A549 (cell line): ENCODE measurements at regions of chr21 and their contacts with region 1.

Region 1: DNA sequence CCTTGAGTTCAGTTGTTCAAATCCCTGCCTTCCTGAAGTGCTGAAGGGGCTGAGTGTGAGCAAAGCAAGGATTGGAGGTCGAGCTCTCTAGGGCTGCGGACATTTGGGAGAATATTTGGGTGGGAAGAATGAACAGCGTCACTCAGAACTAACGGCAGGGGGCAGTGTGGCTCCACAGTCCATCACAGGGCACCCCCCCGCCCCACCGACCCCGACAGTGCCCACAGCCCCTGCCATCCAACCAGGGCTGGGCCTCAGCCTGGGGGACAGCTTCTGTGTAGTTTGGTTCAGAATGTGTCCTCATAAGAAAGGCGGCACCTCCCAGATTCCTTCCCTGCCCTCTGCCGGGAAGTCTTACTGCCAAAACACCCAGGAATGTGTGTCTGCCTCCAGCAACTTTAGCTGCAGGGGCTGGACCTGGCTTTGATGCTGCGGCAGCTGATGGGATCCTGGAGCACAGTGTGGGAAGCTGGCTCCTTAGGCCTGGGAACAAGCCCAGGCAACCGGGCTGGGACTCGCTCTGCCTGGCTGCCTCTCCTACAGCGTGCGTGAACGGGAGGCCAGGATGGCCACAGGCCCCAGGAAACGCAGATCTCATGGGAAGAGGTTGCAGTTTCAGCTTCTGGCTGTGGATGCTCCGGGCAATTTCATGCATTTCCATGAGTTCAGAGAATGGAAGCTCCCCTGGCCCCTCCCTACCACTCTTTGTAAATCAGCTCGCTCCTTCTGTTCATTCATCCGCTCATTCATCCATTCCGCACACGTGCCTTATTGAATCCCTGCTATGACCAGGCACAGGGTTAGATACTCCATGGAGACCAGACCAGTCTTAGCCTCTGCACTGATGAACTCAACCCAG is 104.9 kb upstream of the TMPRSS2 start:
- DNase-seq: peak; percentile 50 to 75
- ATAC-seq: peak; percentile 79 to 91
- H3K4me3 ChIP-seq: no peak overlapping the region
- H3K27ac ChIP-seq: peak overlapping the region; percentile 72 to 85
- H3K4me1 ChIP-seq: peaks cover 28% of the 10 kb centered on the region
- CTCF ChIP-seq: peak; percentile 65
- EP300 ChIP-seq: no peak
- POLR2A ChIP-seq: no peak
- RAD21 ChIP-seq: peak; percentile 85 to 97

Region 2: GRCh38 chr21:41283211-41283818 is 329.6 kb before region 1 on chr21:
- CTCF ChIA-PET with region 1: interaction called, 25 read pairs
- POLR2A ChIA-PET with region 1: no interaction called
- DNase-seq: peak; percentile 50 to 69
- ATAC-seq: peak; percentile 95 to 96
- H3K4me3 ChIP-seq: no peak overlapping the region
- H3K27ac ChIP-seq: no peak overlapping the region
- H3K4me1 ChIP-seq: no peaks in the 10 kb centered on the region
- CTCF ChIP-seq: peak; percentile 71
- EP300 ChIP-seq: no peak
- POLR2A ChIP-seq: no peak
- RAD21 ChIP-seq: peak; percentile 78 to 82

Region 3: GRCh38 chr21:41630249-41630648 is 17.3 kb after region 1 on chr21:
- CTCF ChIA-PET with region 1: interaction called, 72 read pairs
- POLR2A ChIA-PET with region 1: no interaction called
- DNase-seq: peak; percentile 85 to 98
- ATAC-seq: peak; percentile 94 to 95
- H3K4me3 ChIP-seq: no peak overlapping the region
- H3K27ac ChIP-seq: peak overlapping the region; percentile 85 to 94
- H3K4me1 ChIP-seq: peaks cover 54% of the 10 kb centered on the region
- CTCF ChIP-seq: no peak
- EP300 ChIP-seq: peak; percentile 74 to 84; a peak in 3 of 5 replicates
- POLR2A ChIP-seq: no peak
- RAD21 ChIP-seq: peak in 1 of 2 experiments; percentile 30; a peak in 3 of 5 replicates

Region 4: DNA sequence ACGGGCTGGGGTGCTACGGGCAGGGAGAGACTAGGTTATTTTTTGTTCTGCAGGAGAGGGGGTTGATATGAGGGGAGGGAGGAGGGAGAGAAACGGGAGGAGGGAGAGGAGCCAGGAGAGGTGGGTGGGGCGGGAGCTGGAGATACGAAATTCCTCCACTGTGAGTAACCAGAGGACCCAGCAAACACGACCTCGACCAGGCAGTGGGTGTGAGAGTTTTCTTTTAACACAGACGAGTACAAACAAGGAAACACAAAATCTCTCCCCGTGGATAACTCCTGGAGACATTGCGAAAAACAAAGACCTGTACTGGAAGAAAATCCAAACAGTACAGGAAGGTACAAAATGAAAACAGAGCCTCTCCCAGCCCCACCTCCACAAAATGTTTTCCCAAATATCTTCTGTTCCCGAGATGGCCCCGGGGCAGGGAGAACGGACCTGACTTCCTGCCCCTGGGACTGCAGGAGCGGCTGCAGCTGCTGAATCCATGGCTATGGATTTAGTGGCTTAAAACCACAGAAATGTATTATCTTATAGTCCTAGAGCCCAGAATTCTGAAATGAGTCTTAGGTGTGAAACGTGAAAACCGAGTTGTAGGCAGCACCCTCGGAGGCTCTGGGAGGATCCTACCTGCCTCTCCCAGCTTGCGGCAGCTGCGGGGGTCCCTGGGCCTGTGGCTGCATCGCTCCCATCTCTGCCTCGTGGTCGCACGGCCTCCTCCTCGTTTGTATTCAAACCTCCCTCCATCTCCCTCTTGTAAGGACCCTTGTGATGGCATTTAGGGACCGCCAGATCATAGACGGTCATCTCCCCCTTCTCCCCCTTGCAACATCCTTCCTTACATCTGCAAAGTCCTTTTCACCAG is 71.7 kb after region 1 on chr21:
- CTCF ChIA-PET with region 1: interaction called, 20 read pairs
- POLR2A ChIA-PET with region 1: no interaction called
- DNase-seq: peak; percentile 40 to 79
- ATAC-seq: peak; percentile 65 to 71; a peak in 5 of 6 replicates
- H3K4me3 ChIP-seq: no peak overlapping the region
- H3K27ac ChIP-seq: peak overlapping the region; percentile 98
- H3K4me1 ChIP-seq: peaks cover 70% of the 10 kb centered on the region
- CTCF ChIP-seq: no peak
- EP300 ChIP-seq: no peak
- POLR2A ChIP-seq: no peak
- RAD21 ChIP-seq: peak in 1 of 2 experiments; percentile 13; a peak in 1 of 5 replicates

Region 5: DNA sequence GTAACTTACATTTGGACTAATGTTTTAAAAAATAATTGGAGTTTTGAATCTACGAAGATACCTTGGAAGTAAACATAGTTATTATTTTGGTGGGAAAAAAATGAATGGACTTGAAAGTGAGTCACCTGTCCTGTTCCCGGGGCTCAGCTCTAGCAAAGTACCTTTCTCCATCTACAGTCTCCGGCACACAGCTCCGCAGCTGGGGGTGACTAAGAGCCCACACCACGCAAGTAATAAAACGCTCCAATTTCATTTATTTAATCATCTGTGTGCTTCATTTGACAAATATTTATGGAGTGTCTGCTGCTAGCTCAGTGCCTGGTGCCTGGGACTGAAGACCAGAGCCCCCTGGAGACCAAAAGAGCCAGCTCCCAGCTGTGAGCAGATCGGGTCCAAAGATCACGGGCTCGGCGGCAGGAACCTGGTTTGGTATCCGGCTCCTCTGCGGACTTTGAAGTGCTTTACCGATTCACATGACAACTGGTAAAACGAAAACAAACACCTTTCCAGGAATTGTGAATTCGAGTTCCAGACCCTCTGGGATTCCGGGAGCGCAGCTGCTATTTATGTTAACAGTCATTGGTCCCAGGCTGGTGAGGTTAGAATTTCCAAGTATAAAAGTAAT is 155.6 kb after region 1 on chr21:
- CTCF ChIA-PET with region 1: interaction called, 189 read pairs
- POLR2A ChIA-PET with region 1: interaction called, 6 read pairs
- DNase-seq: peak in 1 of 2 experiments; percentile 80
- ATAC-seq: peak; percentile 72 to 74
- H3K4me3 ChIP-seq: peak overlapping the region; percentile 92
- H3K27ac ChIP-seq: peak overlapping the region; percentile 74 to 92
- H3K4me1 ChIP-seq: peaks cover 27% of the 10 kb centered on the region
- CTCF ChIP-seq: peak; percentile 35; the same call in 2 of the 3 replicates
- EP300 ChIP-seq: 0 out of 5 replicates have a peak, but pooled peaks of 1 of the 2 experiments have one; percentile 21
- POLR2A ChIP-seq: no peak
- RAD21 ChIP-seq: peak; percentile 43 to 50; a peak in 4 of 5 replicates

Region 6: GRCh38 chr21:41809891-41810596 is 197.1 kb after region 1 on chr21:
- CTCF ChIA-PET with region 1: interaction called, 127 read pairs
- POLR2A ChIA-PET with region 1: no interaction called
- DNase-seq: no peak
- ATAC-seq: no peak
- H3K4me3 ChIP-seq: no peak overlapping the region
- H3K27ac ChIP-seq: no peak overlapping the region
- H3K4me1 ChIP-seq: no peaks in the 10 kb centered on the region
- CTCF ChIP-seq: no peak
- EP300 ChIP-seq: no peak
- POLR2A ChIP-seq: no peak
- RAD21 ChIP-seq: no peak

Region 7: DNA sequence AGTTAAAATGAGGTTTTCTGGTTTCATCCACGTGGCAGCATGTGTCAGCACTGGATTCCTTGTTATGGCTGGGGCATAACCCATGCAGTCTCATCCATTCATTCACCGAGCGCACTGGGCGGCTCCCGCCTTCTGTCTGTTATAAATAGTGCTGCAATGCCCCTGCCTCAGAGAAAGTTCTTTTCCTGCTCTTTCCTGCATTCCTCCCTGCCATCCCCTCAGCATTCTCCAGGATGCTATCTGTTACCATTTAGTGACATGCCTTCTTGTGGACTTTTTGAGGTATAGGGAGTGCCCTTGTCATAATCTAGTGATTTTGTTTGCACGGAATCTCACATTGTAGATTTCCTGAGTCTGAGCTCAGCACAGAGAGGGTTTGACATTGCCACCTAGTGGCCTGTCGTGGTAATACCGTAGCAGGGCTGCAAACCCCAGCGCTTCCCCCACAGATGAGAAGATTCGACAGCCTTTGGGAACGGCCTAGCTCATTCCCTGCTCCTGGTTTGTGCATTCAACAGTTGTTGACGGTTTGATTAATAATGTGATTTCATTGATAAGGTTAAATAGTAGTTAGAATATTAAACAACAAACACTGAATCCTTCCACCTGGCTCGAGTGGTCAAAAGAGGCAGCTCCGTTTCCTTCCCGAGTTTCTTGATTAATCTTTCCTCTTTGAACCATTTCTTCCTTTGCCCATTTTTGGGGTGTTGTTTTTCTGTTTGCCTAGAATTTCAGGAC is 504.5 kb after region 1 on chr21:
- CTCF ChIA-PET with region 1: interaction called, 17 read pairs
- POLR2A ChIA-PET with region 1: no interaction called
- DNase-seq: peak; percentile 57 to 60
- ATAC-seq: peak; percentile 83 to 89
- H3K4me3 ChIP-seq: no peak overlapping the region
- H3K27ac ChIP-seq: no peak overlapping the region
- H3K4me1 ChIP-seq: peaks cover 7% of the 10 kb centered on the region; the same call in 1 of the 3 replicates
- CTCF ChIP-seq: peak; percentile 67
- EP300 ChIP-seq: no peak
- POLR2A ChIP-seq: no peak
- RAD21 ChIP-seq: peak; percentile 72 to 76